Spleen (tissue), 13 donors: ENCODE measurements at regions of chr5 and their contacts with region 1.

Region 1: DNA sequence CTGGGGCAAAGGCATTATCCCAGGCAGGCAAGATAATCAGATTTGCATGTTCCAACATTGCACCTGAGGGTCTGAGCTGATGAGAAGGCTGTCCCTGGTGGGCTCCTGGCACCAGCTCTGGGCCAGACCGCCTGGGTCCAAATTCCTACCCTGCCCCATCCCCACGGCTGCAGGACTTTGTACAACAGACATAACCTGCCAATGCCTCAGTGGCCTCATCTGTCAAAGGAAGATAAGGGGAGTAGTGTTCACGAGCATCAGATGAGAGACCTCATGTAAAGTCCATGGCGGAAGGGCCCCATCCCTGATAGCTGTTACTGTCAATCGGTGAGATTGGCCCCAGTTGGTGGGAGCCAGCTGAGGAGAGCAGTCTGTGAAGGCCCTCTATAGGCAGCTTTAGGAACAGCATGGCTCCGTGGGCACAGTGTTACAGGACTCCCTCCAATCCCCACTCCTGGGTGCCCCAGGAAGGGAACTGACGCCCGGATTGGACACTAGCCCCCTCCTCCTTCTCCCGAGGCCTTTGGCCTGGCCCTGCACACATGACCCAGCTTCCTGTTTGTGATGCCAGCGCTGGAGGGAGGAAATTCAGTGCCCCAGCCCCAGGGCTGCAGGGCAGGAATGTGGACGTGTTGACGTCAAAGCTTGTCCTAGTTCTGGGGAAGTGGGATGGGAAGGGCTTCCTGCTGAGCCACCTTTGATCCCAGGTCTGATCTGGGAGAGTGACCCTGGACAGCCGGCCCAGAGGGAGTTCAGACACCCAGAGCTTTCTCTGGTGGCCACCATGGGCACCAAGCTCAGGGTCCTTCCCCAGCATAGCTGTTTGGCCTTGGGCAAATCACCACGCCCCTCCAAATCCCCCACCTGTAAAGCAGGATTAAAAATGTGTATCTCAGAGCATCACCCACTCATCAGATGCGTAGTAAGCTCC is 56.2 kb downstream of the DUSP1 start:
- DNase-seq: peak; percentile 89
- H3K4me3 ChIP-seq: no peak overlapping the region
- H3K27ac ChIP-seq: peak overlapping the region; percentile 48 to 87 (median 81)
- H3K4me1 ChIP-seq: peaks cover 32 to 53% (median 44%) of the 10 kb centered on the region in 6 donors
- H3K27me3 ChIP-seq: peaks cover 0 to 26% (median 0%) of the 10 kb centered on the region in 7 donors
- CTCF ChIP-seq: peak; percentile 63 to 95 (median 93)
- POLR2A ChIP-seq: no peak

Region 2: DNA sequence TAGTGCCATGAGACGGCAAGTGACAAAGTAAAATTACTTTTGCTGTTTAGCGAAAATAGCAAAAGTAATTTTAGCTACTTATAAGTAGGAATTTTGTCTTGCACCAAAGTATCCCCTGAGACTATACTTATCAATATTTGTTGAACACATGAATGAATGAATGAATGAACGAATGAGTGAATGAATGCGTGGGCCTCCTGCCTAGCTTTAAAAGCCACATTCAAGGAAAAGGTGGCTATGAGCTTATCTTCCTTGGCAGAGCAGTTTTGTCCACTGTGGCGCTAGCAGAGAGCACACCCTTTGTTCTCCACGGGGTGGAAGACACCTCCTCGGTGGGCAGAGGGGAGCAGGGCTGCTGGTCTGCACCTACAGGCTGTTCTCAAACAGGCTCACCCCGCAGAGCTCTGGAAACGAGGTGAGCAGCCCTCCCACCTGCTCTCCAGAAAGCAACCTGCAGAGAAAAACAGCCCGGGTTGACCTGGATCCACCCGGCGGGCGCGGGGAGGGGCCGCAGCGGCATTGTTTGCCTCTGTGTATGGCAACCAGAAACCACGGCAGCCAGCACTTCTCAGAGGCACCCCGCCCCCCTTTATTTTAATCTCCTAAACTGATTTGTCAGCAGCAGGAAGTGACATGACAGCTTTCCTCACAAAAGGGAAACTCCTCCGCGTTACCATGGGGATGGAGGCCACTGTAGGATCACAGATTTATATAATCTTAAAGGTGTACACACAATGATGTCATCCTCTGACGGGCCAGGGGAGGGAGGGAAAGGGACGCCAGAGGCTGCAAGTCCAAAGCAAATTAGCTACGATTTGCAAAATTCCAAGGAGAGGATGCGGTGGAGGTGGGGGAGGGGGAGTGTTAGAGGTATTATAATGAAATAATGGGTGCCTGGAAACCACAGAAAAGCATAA is 50.4 kb after region 1 on chr5:
- intact Hi-C with region 1: loop called (anchors 5 kb)
- DNase-seq: peak; percentile 98
- H3K4me3 ChIP-seq: peak overlapping the region; percentile 18 to 87 (median 37)
- H3K27ac ChIP-seq: peak overlapping the region; percentile 67 to 100 (median 100)
- H3K4me1 ChIP-seq: peaks cover 17 to 70% (median 54%) of the 10 kb centered on the region in 6 donors
- H3K27me3 ChIP-seq: no peaks in the 10 kb centered on the region
- CTCF ChIP-seq: peak in 1 of 11 experiments; percentile 23
- POLR2A ChIP-seq: peak in 1 of 3 donors; percentile 27

Region 3: GRCh38 chr5:172931001-172931536 is 216.3 kb after region 1 on chr5:
- intact Hi-C with region 1: loop called (anchors 2 kb)
- DNase-seq: no peak
- H3K4me3 ChIP-seq: no peak overlapping the region
- H3K27ac ChIP-seq: peak overlapping the region in 7 of 8 donors; percentile 17 to 82 (median 70)
- H3K4me1 ChIP-seq: peaks cover 3 to 29% (median 23%) of the 10 kb centered on the region in 6 donors
- H3K27me3 ChIP-seq: no peaks in the 10 kb centered on the region
- CTCF ChIP-seq: no peak
- POLR2A ChIP-seq: no peak

Region 4: DNA sequence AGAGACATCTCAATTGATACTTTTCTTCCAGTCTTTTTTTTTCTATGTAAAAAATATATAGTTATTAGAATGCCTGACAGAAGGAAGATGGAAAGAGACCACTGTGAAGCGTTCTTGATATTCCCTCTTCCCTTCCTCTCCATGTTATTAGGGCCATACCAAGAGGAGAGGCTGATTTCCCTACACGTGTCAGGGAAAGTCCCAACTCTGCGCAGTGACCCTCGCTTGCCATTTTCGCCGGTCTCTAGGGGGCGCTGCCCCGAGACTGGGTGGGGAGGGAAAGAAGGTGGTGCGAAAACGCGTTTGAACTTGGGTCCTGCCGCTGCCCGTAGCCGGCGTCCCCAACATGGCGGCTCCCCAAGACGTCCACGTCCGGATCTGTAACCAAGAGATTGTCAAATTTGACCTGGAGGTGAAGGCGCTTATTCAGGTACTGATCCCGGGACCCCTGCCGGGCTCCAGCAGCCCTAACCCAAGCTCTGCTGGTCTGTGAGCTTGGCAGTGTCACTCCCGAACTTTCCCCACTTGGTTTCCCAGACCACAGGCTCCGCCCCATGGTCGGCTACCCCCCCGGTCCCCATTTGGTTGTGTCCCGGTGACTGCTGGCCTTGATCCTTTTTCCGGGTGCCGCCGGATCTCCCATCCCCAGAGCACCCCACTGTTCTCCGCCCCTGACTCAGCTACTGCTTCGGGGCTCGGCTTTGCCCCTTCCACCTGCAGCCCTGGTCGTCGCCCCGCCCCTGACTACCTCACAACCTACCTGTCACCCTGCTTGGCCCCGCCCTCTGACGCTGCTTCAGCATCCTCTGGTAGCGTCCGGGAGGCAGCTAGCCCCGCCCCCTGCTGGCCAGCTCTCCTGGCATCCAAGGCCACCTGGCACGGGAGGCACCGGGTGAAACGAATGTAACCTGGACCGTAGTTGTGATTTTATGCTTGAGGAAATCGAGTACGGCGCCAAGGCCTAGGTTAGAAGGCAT is 429.7 kb after region 1 on chr5 and contains the start of gene BNIP1:
- intact Hi-C with region 1: loop called (anchors 10 kb)
- DNase-seq: peak; percentile 99
- H3K4me3 ChIP-seq: peak within 1 kb of the TSS; percentile 68 to 98 (median 86)
- H3K27ac ChIP-seq: peak within 1 kb of the TSS; percentile 89 to 94 (median 92)
- H3K4me1 ChIP-seq: peaks cover 0 to 25% (median 16%) of the 10 kb centered on the region in 6 donors
- H3K27me3 ChIP-seq: no peaks in the 10 kb centered on the region
- CTCF ChIP-seq: peak; percentile 82 to 96 (median 92)
- POLR2A ChIP-seq: no peak
- total RNA-seq, gene BNIP1: 6.0 to 12.3 (median 9.8) TPM